ENCODE measurements at regions of chr6 and their contacts with region 1.

Region 1: DNA sequence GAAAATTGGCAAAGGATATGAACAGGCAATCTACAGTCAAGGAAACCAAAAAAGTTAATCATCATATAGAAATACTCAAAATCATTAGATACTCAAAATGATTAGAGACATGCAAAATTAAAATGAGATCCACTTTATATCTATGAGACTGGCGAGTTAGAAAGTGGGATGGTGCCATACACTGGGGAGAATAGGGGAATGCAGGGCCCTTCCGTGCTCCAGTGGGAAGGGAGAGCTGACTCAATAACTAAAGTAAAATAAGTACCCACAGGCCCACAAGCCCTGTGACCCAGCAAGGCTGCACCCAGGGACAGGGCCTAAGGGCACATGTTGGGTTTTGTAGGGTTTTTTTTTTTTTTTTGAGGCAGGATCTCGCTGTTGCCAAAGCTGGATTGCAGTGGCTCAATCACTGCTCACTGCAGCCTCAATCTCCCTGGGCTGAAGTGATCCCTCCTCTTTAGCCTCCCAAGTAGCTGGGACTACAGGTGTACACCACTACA is 44.9 kb downstream of the BAK1 start:
- DNase-seq: no peak
- H3K4me3 Mint-ChIP-seq: no peak overlapping the region
- H3K27ac Mint-ChIP-seq: no peak overlapping the region
- H3K4me1 Mint-ChIP-seq: peaks cover 25% of the 10 kb centered on the region
- H3K27me3 Mint-ChIP-seq: no peaks in the 10 kb centered on the region

Region 2: GRCh38 chr6:33313709-33314514 is 221.2 kb before region 1 on chr6 and contains the start of gene TAPBP:
- CTCF ChIA-PET with region 1: no interaction called
- POLR2A ChIA-PET with region 1: no interaction called
- DNase-seq: peak; percentile 84
- H3K4me3 Mint-ChIP-seq: peak within 1 kb of the TSS; percentile 87
- H3K27ac Mint-ChIP-seq: peak within 1 kb of the TSS; percentile 91
- H3K4me1 Mint-ChIP-seq: peaks cover 65% of the 10 kb centered on the region
- H3K27me3 Mint-ChIP-seq: no peaks in the 10 kb centered on the region
- total RNA-seq, gene TAPBP: 243 to 249 TPM

Region 3: DNA sequence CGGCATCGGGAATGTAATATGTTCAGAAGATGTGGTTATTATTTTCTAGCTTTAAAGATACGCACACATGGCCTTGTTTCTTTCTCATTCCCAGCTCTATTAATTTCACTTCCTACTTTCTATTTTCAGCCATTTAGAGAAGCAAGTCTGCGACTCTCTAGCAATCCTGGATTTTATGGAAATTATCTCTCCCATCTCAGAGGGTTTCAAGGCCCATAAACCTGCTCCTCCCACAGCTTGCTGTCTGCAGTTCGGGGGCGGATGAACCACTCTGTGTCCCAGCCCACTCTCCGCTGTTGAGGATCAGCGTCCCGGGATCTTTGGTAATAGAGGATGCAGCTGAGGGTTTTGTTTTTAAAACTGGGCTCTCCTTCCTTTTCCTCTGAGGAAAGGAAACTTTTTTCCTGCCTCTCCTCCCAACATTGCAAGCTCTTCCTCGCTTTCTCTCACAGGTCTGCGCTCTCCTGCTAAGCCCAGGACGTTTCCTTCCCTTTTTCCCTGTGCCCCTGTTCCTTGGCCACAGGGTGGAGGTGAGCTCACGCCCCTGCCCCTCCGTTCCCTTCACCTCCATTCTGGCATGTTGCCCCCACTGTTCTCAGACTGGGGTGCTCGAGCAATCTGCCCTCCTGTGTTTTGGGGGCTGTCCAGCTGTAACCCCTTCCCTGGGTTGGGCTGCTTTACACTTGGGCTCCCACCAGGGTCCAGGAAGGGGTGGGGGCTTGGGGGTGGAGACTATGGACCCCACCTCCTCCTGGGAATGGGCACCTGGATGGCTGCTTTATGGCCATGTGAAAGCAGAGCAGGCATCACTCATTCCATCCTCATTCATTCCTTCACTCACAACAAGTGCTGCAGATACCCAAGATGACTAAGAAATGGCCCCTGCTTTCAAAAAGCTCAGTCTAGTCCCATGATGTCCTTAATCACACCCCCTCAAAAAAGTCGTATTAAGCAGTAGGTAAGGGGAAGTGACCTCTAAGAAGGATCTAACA is 25.9 kb before region 1 on chr6:
- CTCF ChIA-PET with region 1: no interaction called
- POLR2A ChIA-PET with region 1: interaction called, 11 read pairs
- DNase-seq: no peak
- H3K4me3 Mint-ChIP-seq: no peak overlapping the region
- H3K27ac Mint-ChIP-seq: no peak overlapping the region
- H3K4me1 Mint-ChIP-seq: peaks cover 24% of the 10 kb centered on the region
- H3K27me3 Mint-ChIP-seq: peaks cover 4% of the 10 kb centered on the region

Region 4: GRCh38 chr6:33547499-33547898 is 12.3 kb after region 1 on chr6:
- CTCF ChIA-PET with region 1: interaction called, 5 read pairs
- POLR2A ChIA-PET with region 1: interaction called, 18 read pairs
- DNase-seq: no peak
- H3K4me3 Mint-ChIP-seq: no peak overlapping the region
- H3K27ac Mint-ChIP-seq: peak overlapping the region; percentile 72
- H3K4me1 Mint-ChIP-seq: peaks cover 21% of the 10 kb centered on the region
- H3K27me3 Mint-ChIP-seq: no peaks in the 10 kb centered on the region

Region 5: GRCh38 chr6:33673851-33674250 is 138.7 kb after region 1 on chr6:
- CTCF ChIA-PET with region 1: no interaction called
- POLR2A ChIA-PET with region 1: no interaction called
- DNase-seq: no peak
- H3K4me3 Mint-ChIP-seq: no peak overlapping the region
- H3K27ac Mint-ChIP-seq: no peak overlapping the region
- H3K4me1 Mint-ChIP-seq: peaks cover 11% of the 10 kb centered on the region
- H3K27me3 Mint-ChIP-seq: no peaks in the 10 kb centered on the region

Measured in activated CD4-positive, alpha-beta memory T cell treated with anti-CD3 and anti-CD28 coated beads, Interleukin-2, amount 10 ng/mL, durations not matched to agents 7 days and 5 days (primary cell).